ENCODE measurements at regions of chr6 and their contacts with region 1.

Region 1: GRCh38 chr6:166969390-166970002 is 13.1 kb upstream of the RNASET2 start:
- DNase-seq: peak; percentile 45 to 86 (median 68)
- H3K4me3 ChIP-seq: peak overlapping the region in 3 of 7 experiments; percentile 3 to 38 (median 34)
- H3K27ac ChIP-seq: no peak overlapping the region
- H3K4me1 ChIP-seq: peaks cover 11 to 27% (median 19%) of the 10 kb centered on the region in 4 experiments
- H3K27me3 ChIP-seq: peaks cover 0 to 56% (median 0%) of the 10 kb centered on the region in 5 experiments

Region 2: DNA sequence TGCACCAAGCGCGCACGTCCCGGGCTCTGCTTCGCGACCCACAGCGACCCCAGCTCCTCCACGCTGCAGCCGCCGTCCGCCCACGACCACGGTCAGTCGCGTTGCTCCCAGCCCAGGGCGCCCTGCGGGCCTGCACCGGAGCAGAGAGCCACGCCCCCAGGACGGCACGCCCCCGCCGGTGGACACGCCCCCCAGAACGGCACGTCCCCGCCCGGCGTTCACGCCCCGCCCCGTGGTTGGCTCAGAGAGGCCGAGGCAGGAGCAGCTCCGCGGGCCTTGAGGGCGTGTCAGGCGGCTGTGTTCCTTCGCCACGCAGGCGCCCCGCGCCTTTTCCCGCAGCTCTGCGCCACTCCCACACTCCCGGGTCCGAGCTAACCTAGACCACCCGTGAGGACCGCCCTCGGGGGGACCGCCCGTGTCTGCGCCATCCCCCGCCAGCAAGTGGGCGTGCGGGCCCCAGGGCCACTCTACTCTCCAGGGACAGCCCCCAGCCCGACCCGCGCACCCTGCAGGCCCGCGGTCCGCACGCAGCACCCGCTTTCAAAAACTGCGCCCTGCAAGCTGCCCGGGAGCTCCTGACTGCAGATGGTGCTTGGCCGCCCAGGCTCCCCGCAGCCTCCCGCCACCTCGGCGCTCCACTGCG is 12.9 kb before region 1 on chr6 and contains the start of gene RNASET2:
- CTCF ChIA-PET with region 1: interaction called, 11 read pairs
- POLR2A ChIA-PET with region 1: interaction called, 3 read pairs
- DNase-seq: peak; percentile 87 to 92 (median 91)
- H3K4me3 ChIP-seq: peak within 1 kb of the TSS; percentile 72 to 91 (median 84)
- H3K27ac ChIP-seq: peak within 1 kb of the TSS; percentile 50 to 81
- H3K4me1 ChIP-seq: peaks cover 24 to 49% (median 43%) of the 10 kb centered on the region in 4 experiments
- H3K27me3 ChIP-seq: peaks cover 0 to 31% (median 0%) of the 10 kb centered on the region in 5 experiments

Region 3: GRCh38 chr6:167113935-167114910 is 144.7 kb after region 1 on chr6:
- CTCF ChIA-PET with region 1: no interaction called
- POLR2A ChIA-PET with region 1: no interaction called
- DNase-seq: peak in 1 of 3 donors; percentile 58
- H3K4me3 ChIP-seq: no peak overlapping the region
- H3K27ac ChIP-seq: peak overlapping the region in 1 of 2 experiments; percentile 35
- H3K4me1 ChIP-seq: peaks cover 0 to 5% (median 2%) of the 10 kb centered on the region in 4 experiments
- H3K27me3 ChIP-seq: no peaks in the 10 kb centered on the region

Measured in common myeloid progenitor, CD34-positive (primary cell).